ENCODE measurements at regions of chr6 and their contacts with region 1.

Region 1: DNA sequence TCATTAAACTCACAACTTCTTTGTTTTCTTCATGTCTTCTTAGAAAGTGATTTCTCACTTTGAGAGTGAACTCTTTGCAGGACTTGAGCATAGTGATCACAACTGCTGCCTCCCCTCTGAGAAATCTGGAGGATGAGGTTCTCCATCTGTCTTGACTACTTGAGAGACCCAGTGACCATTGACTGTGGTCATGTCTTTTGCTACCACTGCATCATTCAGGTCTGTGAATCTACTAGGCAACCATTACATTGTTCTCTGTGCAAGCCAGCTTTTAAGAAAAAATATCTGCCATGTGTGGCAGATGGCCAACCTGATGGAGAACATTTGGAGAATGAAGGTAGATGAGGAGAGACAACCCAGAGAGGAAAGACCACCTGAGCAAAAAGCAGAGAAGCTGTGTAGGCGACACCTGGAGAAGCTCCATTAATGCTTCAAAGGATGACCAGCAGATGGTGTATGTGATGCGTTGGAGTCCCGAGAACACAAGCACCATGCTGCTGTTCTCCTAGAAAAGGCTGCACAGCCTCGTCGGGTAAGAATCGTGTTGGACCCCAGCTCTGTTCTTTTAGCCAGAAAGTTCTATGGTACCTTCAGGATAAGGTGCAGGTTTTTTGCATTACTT is 25.1 kb upstream of the TRIM26 start:
- DNase-seq: no peak
- H3K4me3 ChIP-seq: no peak overlapping the region
- H3K4me1 ChIP-seq: no peaks in the 10 kb centered on the region
- H3K27me3 ChIP-seq: peaks cover 18% of the 10 kb centered on the region

Region 2: GRCh38 chr6:29227235-29227634 is 1011.0 kb before region 1 on chr6:
- in situ Hi-C with region 1: no loop called
- DNase-seq: no peak
- H3K4me3 ChIP-seq: no peak overlapping the region
- H3K4me1 ChIP-seq: no peaks in the 10 kb centered on the region
- H3K27me3 ChIP-seq: peaks cover 10% of the 10 kb centered on the region; the same call in 1 of the 2 replicates

Region 3: DNA sequence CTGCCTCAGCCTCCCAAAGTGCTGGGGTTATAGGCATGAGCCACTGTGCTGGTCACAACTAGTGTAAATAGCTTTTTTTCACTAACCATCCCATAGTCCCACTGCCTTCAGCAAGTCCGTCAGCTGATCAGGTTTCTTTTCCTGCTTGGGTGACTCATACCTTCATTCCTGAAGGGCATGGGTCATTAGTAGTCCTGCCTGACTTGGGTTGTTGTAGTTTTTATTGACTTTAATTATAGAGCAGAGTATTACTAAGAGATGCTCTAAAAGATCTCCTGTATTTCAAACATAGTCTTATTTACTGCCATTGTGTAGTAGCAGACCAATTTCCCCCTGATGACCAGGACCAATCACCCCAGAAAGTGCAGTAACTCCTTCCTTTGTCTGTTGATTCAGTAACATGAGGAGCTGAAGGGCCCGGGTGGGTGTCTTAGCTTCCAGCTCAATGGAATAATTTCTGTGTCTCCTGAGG is 1007.8 kb after region 1 on chr6:
- in situ Hi-C with region 1: loop called (anchors 25 kb)
- DNase-seq: no peak
- H3K4me3 ChIP-seq: no peak overlapping the region
- H3K4me1 ChIP-seq: no peaks in the 10 kb centered on the region
- H3K27me3 ChIP-seq: 0 out of 2 replicates have a peak, but pooled peaks cover 3% of the 10 kb centered on the region

Measured in HAP-1 (cell line).